ENCODE measurements at regions of chr9 and their contacts with region 1.

Region 1: DNA sequence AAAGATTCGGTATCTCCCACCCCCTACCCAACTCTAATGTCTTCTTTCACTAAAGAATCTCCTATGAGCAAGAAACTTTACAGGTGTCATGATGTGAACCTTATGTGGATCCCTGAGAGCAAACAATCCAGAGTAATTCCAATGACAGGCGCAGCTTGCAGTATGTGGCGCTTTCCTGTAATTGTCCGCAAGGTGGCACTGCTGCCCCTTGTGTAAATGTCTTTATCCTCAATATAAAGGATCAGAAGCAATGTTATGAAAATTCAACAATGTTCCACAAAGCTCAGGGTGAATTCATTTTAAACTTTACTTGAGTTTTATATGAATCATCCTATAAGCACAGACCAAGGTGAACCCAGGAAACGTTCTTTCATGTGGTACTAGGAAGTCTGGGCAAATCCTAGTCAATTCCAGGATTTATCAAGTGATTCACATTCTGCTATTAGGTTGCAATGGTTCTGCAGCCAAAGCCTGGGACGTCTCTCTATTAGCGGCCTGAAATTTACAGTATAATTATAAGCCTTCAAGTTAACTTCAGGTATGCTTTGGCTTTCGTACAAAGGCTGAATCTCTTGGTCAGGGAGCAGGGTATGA is 113.7 kb downstream of the TRPM6 start:
- DNase-seq: peak; percentile 61 to 66 (median 61)
- H3K4me3 ChIP-seq: no peak overlapping the region
- H3K4me3 Mint-ChIP-seq: no peak overlapping the region
- H3K27ac ChIP-seq: no peak overlapping the region
- H3K27ac Mint-ChIP-seq: no peak overlapping the region
- H3K4me1 ChIP-seq: no peaks in the 10 kb centered on the region
- H3K4me1 Mint-ChIP-seq: peaks cover 0 to 3% (median 2%) of the 10 kb centered on the region in 4 donors
- H3K27me3 ChIP-seq: no peaks in the 10 kb centered on the region
- H3K27me3 Mint-ChIP-seq: peaks cover 14 to 19% of the 10 kb centered on the region in 2 donors

Region 2: GRCh38 chr9:74755999-74756398 is 18.0 kb before region 1 on chr9:
- CTCF ChIA-PET with region 1: interaction called, 13 read pairs
- POLR2A ChIA-PET with region 1: interaction called, 3 read pairs
- intact Hi-C with region 1: no loop called
- DNase-seq: no peak
- H3K4me3 ChIP-seq: no peak overlapping the region
- H3K4me3 Mint-ChIP-seq: no peak overlapping the region
- H3K27ac ChIP-seq: no peak overlapping the region
- H3K27ac Mint-ChIP-seq: no peak overlapping the region
- H3K4me1 ChIP-seq: no peaks in the 10 kb centered on the region
- H3K4me1 Mint-ChIP-seq: no peaks in the 10 kb centered on the region
- H3K27me3 ChIP-seq: no peaks in the 10 kb centered on the region
- H3K27me3 Mint-ChIP-seq: peaks cover 0 to 2% of the 10 kb centered on the region in 2 donors

Region 3: GRCh38 chr9:74920944-74921626 is 147.1 kb after region 1 on chr9:
- CTCF ChIA-PET with region 1: no interaction called
- POLR2A ChIA-PET with region 1: no interaction called
- intact Hi-C with region 1: no loop called
- DNase-seq: no peak
- H3K4me3 ChIP-seq: no peak overlapping the region
- H3K4me3 Mint-ChIP-seq: no peak overlapping the region
- H3K27ac ChIP-seq: no peak overlapping the region
- H3K27ac Mint-ChIP-seq: no peak overlapping the region
- H3K4me1 ChIP-seq: no peaks in the 10 kb centered on the region
- H3K4me1 Mint-ChIP-seq: no peaks in the 10 kb centered on the region
- H3K27me3 ChIP-seq: no peaks in the 10 kb centered on the region
- H3K27me3 Mint-ChIP-seq: peaks cover 0 to 3% of the 10 kb centered on the region in 2 donors

Region 4: GRCh38 chr9:75001719-75002422 is 227.9 kb after region 1 on chr9:
- CTCF ChIA-PET with region 1: interaction called, 284 read pairs
- POLR2A ChIA-PET with region 1: interaction called, 3 read pairs
- intact Hi-C with region 1: loop called (anchors 1 kb)
- DNase-seq: peak in 4 of 5 donors; percentile 65 to 67 (median 66)
- H3K4me3 ChIP-seq: no peak overlapping the region
- H3K4me3 Mint-ChIP-seq: no peak overlapping the region
- H3K27ac ChIP-seq: no peak overlapping the region
- H3K27ac Mint-ChIP-seq: no peak overlapping the region
- H3K4me1 ChIP-seq: no peaks in the 10 kb centered on the region
- H3K4me1 Mint-ChIP-seq: peaks cover 0 to 7% (median 6%) of the 10 kb centered on the region in 4 donors
- H3K27me3 ChIP-seq: no peaks in the 10 kb centered on the region
- H3K27me3 Mint-ChIP-seq: no peaks in the 10 kb centered on the region

Region 5: GRCh38 chr9:75064307-75065025 is 290.5 kb after region 1 on chr9:
- CTCF ChIA-PET with region 1: interaction called, 15 read pairs
- POLR2A ChIA-PET with region 1: no interaction called
- intact Hi-C with region 1: no loop called
- DNase-seq: no peak
- H3K4me3 ChIP-seq: no peak overlapping the region
- H3K4me3 Mint-ChIP-seq: no peak overlapping the region
- H3K27ac ChIP-seq: no peak overlapping the region
- H3K27ac Mint-ChIP-seq: peak overlapping the region in 4 of 7 donors; percentile 17 to 78 (median 58)
- H3K4me1 ChIP-seq: no peaks in the 10 kb centered on the region
- H3K4me1 Mint-ChIP-seq: peaks cover 0 to 8% (median 0%) of the 10 kb centered on the region in 4 donors
- H3K27me3 ChIP-seq: no peaks in the 10 kb centered on the region
- H3K27me3 Mint-ChIP-seq: no peaks in the 10 kb centered on the region

Region 6: GRCh38 chr9:75238311-75238978 is 464.5 kb after region 1 on chr9:
- CTCF ChIA-PET with region 1: interaction called, 16 read pairs
- POLR2A ChIA-PET with region 1: no interaction called
- intact Hi-C with region 1: no loop called
- DNase-seq: peak; percentile 45 to 66 (median 49)
- H3K4me3 ChIP-seq: no peak overlapping the region
- H3K4me3 Mint-ChIP-seq: no peak overlapping the region
- H3K27ac ChIP-seq: no peak overlapping the region
- H3K27ac Mint-ChIP-seq: peak overlapping the region in 1 of 7 donors; percentile 25
- H3K4me1 ChIP-seq: no peaks in the 10 kb centered on the region
- H3K4me1 Mint-ChIP-seq: no peaks in the 10 kb centered on the region
- H3K27me3 ChIP-seq: no peaks in the 10 kb centered on the region
- H3K27me3 Mint-ChIP-seq: no peaks in the 10 kb centered on the region

Measured in CD4-positive, alpha-beta memory T cell (primary cell).